ENCODE measurements at regions of chr13 and their contacts with region 1.

Region 1: DNA sequence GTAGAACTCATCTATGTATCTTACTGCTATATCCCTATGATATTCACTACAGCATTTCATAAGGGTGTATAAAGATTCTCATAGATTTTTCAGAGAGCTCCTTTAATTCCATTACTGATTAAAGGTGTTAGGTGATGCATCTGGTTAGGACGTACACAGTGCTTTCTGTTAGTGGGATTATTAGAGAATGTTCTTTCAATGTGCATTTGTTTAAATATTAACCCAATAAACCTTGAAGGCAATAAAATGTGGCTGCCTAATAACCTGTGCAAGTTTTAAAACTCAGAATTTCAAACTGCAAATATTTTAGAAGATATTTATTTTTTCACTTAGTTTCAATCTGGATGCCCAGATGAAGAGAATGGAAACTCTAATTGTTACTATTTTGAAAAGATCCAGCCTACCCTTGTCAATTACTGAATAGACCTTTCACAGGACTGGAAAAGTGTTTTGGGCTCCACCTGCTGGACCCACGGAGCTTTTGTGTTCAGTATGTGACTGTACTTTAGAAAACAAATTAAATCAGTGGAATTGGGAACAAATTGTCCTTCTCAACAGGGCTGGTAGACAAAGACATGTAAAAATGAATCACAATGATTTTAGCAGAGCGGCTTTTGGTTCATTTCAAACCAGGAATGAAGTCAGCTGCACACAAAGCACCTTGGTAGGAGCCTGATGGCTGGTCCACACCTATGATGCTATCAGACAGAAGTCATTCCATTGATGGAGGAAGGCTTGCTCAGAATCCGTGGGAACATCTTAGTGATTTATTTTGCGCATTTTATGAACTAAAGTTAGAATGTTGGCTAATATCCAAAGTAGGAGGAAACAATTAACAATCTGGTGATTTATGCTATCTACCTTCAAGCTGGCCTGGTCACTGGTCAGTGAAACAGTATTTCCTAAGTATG is 89.4 kb upstream of the RAP2A start:
- DNase-seq: peak; percentile 76
- H3K4me3 ChIP-seq: no peak overlapping the region
- H3K27ac ChIP-seq: no peak overlapping the region
- H3K4me1 ChIP-seq: peaks cover 12% of the 10 kb centered on the region
- H3K27me3 ChIP-seq: no peaks in the 10 kb centered on the region

Region 2: DNA sequence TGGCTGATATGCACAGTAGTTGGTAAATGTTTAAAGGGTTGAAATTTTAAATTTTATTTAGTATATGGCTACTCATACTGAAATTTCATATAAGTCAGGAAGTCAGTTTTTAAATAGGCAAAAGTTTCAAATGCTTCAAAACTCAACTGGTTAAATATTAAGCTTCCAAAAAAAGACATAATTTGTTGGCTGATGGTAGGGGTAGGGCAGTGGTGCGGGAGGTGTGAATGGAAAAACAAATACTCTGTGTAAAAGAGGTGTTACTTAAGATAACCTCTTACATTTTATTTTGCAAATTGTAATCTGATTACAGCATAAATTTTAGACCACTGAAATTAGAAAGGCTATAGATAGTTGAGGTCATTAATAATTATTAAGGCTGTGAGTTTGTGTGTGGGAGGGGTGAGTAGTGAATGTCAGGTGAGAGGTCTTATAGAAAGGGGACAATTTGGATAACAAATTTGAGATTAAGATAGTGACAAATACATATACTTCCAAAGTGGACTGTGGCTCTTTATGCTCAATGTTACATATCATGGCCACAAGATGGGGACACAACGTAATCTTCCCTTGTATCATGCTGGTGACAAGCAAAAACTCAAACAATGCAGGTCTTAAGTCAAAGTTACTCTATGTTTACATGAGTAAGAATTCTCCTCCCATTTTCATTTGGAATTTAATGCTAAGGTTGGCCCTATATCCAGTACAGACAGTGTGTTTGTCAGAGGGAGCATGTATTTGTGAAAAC is 313.6 kb before region 1 on chr13:
- in situ Hi-C with region 1: loop called (anchors 10 kb)
- DNase-seq: peak; percentile 72
- H3K4me3 ChIP-seq: no peak overlapping the region
- H3K27ac ChIP-seq: no peak overlapping the region
- H3K4me1 ChIP-seq: peaks cover 9% of the 10 kb centered on the region; the same call in 1 of the 2 replicates
- H3K27me3 ChIP-seq: no peaks in the 10 kb centered on the region

Region 3: DNA sequence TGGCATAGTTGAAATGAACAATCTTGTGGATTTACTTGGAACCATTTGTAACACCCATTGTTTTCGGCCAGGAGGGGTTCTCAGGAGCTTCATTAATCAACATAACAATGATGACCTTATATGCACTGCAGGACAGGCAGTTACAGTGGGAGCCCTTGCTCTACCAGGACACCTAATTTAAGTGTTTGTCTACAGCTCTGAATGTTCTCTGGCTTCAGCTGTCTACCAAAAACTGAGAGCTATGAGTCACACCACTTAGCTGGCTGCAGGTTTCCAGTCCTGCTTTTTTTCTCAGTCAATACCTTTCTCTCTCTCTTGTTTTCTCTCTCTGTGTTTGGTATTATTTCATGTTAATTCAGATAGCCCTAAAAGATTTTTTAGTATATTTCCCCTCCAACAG is 227.8 kb before region 1 on chr13:
- in situ Hi-C with region 1: loop called (anchors 5 kb)
- DNase-seq: peak; percentile 69
- H3K4me3 ChIP-seq: no peak overlapping the region
- H3K27ac ChIP-seq: no peak overlapping the region
- H3K4me1 ChIP-seq: peaks cover 29% of the 10 kb centered on the region
- H3K27me3 ChIP-seq: no peaks in the 10 kb centered on the region

Region 4: GRCh38 chr13:97212601-97213040 is 131.9 kb before region 1 on chr13:
- in situ Hi-C with region 1: loop called (anchors 5 kb)
- DNase-seq: peak; percentile 69
- H3K4me3 ChIP-seq: no peak overlapping the region
- H3K27ac ChIP-seq: no peak overlapping the region
- H3K4me1 ChIP-seq: no peaks in the 10 kb centered on the region
- H3K27me3 ChIP-seq: no peaks in the 10 kb centered on the region

Measured in GM23248 (cell line).